Activated CD4-positive, alpha-beta memory T cell treated with anti-CD3 and anti-CD28 coated beads, Interleukin-2, amount 10 ng/mL, durations not matched to agents 7 days and 5 days (primary cell): ENCODE measurements at regions of chr16 and their contacts with region 1.

Region 1: DNA sequence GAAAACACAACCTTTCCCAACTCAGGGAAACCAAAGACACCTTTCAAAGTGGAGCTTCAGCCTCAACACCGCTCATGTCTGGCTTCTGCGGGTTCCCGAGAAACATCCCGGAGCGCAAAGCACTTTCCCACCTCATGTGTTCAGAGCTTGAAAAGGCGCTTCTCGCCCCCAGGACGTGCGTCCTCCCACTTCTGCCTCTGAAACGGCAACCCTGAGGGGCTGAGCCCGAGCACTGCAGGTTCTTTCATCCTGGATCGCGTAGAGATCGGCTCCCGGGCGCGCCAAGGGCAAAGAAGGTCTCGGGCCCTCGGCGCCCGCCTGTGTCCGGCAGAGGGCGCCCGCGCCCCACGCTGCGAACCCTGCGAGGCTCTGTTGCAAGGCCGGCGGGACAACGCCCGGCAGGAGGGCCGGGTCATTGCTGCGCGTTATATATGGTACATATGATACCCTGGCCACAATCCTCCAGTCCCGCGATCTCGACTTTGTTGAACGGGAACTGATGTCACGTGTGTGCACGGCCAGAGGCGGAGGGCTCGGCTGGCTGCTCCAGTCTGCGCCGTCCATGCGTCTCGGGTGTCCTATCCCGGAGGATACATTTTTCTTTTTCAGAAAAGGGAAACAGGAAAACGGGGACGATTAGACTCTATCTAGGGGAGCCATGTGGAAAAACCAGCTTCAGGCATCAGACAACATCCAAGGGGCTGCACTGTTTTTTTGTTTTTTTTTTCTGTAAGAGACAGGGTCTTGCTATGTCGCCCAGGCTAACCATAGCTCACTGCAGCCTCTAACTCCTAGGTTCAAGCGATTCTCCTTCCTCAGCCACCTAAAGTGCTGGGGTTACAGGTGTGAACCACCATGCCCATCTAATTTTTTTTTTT is 19.1 kb downstream of the COQ7 start:
- DNase-seq: peak; percentile 81
- H3K4me3 Mint-ChIP-seq: peak overlapping the region; percentile 27
- H3K27ac Mint-ChIP-seq: no peak overlapping the region
- H3K4me1 Mint-ChIP-seq: peaks cover 7% of the 10 kb centered on the region
- H3K27me3 Mint-ChIP-seq: peaks cover 9% of the 10 kb centered on the region

Region 2: GRCh38 chr16:19179546-19180490 is 93.3 kb after region 1 on chr16:
- CTCF ChIA-PET with region 1: interaction called, 89 read pairs
- POLR2A ChIA-PET with region 1: no interaction called
- DNase-seq: peak; percentile 58
- H3K4me3 Mint-ChIP-seq: no peak overlapping the region
- H3K27ac Mint-ChIP-seq: no peak overlapping the region
- H3K4me1 Mint-ChIP-seq: no peaks in the 10 kb centered on the region
- H3K27me3 Mint-ChIP-seq: peaks cover 4% of the 10 kb centered on the region

Region 3: GRCh38 chr16:19375561-19376158 is 289.1 kb after region 1 on chr16:
- CTCF ChIA-PET with region 1: interaction called, 30 read pairs
- POLR2A ChIA-PET with region 1: no interaction called
- DNase-seq: peak; percentile 46
- H3K4me3 Mint-ChIP-seq: no peak overlapping the region
- H3K27ac Mint-ChIP-seq: no peak overlapping the region
- H3K4me1 Mint-ChIP-seq: peaks cover 12% of the 10 kb centered on the region
- H3K27me3 Mint-ChIP-seq: no peaks in the 10 kb centered on the region